WTC11 (cell line): ENCODE measurements at regions of chr4 and their contacts with region 1.

Region 1: GRCh38 chr4:88591787-88592599 is at the start of gene HERC3:
- DNase-seq: peak; percentile 89
- ATAC-seq: peak; percentile 97
- H3K4me3 Mint-ChIP-seq: peak within 1 kb of the TSS; percentile 81
- H3K27ac Mint-ChIP-seq: no peak within 1 kb of the TSS
- H3K4me1 Mint-ChIP-seq: peaks cover 13% of the 10 kb centered on the region
- H3K27me3 Mint-ChIP-seq: peaks cover 67% of the 10 kb centered on the region
- CTCF ChIP-seq: no peak
- total RNA-seq, gene HERC3: 5.2 to 6.3 TPM (median 5.5 TPM) in 3 replicates

Region 2: GRCh38 chr4:88573995-88574394 is 18.0 kb before region 1 on chr4:
- CTCF ChIA-PET with region 1: interaction called, 18 read pairs
- POLR2A ChIA-PET with region 1: no interaction called
- DNase-seq: no peak
- ATAC-seq: peak; percentile 98
- H3K4me3 Mint-ChIP-seq: no peak overlapping the region
- H3K27ac Mint-ChIP-seq: no peak overlapping the region
- H3K4me1 Mint-ChIP-seq: peaks cover 18% of the 10 kb centered on the region
- H3K27me3 Mint-ChIP-seq: peaks cover 2% of the 10 kb centered on the region; the same call in 1 of the 2 replicates
- CTCF ChIP-seq: no peak

Region 3: DNA sequence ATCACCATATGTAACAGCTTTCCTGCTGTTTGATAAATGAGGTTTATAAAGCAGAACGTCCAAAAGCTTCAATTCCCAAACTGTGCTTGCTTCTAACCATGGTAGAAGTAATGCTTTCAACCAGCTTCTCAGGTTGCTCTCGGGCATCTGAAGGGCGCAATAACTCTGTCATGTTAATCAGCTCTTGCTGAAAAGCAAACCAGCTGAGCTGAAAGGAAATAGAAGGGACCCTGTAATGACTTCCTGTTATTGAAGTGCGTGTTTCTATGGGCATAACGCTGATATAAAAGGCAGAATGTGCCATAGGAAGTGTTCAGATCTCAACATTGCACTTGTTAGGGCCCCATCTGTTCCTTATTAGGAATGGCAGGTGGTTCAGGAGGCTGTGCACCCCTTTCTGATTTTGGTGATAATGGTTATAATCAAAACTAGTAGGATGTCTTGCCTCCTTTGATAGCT is 21.5 kb after region 1 on chr4:
- CTCF ChIA-PET with region 1: no interaction called
- POLR2A ChIA-PET with region 1: no interaction called
- DNase-seq: no peak
- ATAC-seq: peak; percentile 69
- H3K4me3 Mint-ChIP-seq: no peak overlapping the region; the same call in 1 of the 2 replicates
- H3K27ac Mint-ChIP-seq: peak overlapping the region; percentile 58; the same call in 1 of the 2 replicates
- H3K4me1 Mint-ChIP-seq: peaks cover 22% of the 10 kb centered on the region
- H3K27me3 Mint-ChIP-seq: no peaks in the 10 kb centered on the region
- CTCF ChIP-seq: no peak

Region 4: GRCh38 chr4:88967852-88968331 is 375.9 kb after region 1 on chr4:
- CTCF ChIA-PET with region 1: no interaction called
- POLR2A ChIA-PET with region 1: no interaction called
- DNase-seq: no peak
- ATAC-seq: no peak
- H3K4me3 Mint-ChIP-seq: no peak overlapping the region
- H3K27ac Mint-ChIP-seq: 0 out of 2 replicates have a peak overlapping the region, but pooled peaks have one; percentile 9
- H3K4me1 Mint-ChIP-seq: peaks cover 11% of the 10 kb centered on the region
- H3K27me3 Mint-ChIP-seq: no peaks in the 10 kb centered on the region
- CTCF ChIP-seq: no peak